CD8-positive, alpha-beta T cell (primary cell): ENCODE measurements at regions of chr5 and their contacts with region 1.

Region 1: GRCh38 chr5:126499853-126500342 is 76.7 kb downstream of the GRAMD2B start:
- DNase-seq: peak in 5 of 9 experiments; percentile 20 to 73 (median 34)
- ATAC-seq: peak; percentile 82
- H3K4me3 ChIP-seq: no peak overlapping the region
- H3K4me3 Mint-ChIP-seq: peak overlapping the region; percentile 6
- H3K27ac ChIP-seq: no peak overlapping the region
- H3K27ac Mint-ChIP-seq: peak overlapping the region; percentile 84
- H3K4me1 ChIP-seq: peaks cover 13% of the 10 kb centered on the region
- H3K4me1 Mint-ChIP-seq: peaks cover 35% of the 10 kb centered on the region
- H3K27me3 ChIP-seq: no peaks in the 10 kb centered on the region
- H3K27me3 Mint-ChIP-seq: no peaks in the 10 kb centered on the region
- CTCF ChIP-seq: peak; percentile 60

Region 2: DNA sequence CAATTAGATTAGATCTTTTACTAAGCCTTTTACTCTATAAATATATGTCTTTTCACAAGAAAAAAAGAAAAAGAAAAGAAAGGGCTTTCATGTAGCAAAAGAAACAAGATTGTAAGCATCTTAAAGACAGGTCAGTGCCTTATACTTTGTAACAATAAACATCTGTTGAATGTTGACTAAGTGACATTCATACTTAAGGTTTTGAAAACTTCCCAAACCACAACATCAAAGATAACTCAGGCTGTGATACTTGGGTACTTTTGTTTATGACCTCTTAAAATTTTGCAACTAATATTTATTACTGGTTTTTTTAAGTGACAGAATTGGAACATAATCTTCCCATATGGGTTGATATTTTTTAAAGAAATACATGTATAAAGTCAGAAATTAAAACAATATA is 69.3 kb before region 1 on chr5:
- CTCF ChIA-PET with region 1: interaction called, 5 read pairs
- POLR2A ChIA-PET with region 1: no interaction called
- intact Hi-C with region 1: loop called in 1 of 2 experiments (anchors 5 kb)
- DNase-seq: no peak
- ATAC-seq: no peak
- H3K4me3 ChIP-seq: no peak overlapping the region
- H3K4me3 Mint-ChIP-seq: no peak overlapping the region
- H3K27ac ChIP-seq: no peak overlapping the region
- H3K27ac Mint-ChIP-seq: no peak overlapping the region
- H3K4me1 ChIP-seq: no peaks in the 10 kb centered on the region
- H3K4me1 Mint-ChIP-seq: peaks cover 29% of the 10 kb centered on the region
- H3K27me3 ChIP-seq: no peaks in the 10 kb centered on the region
- H3K27me3 Mint-ChIP-seq: no peaks in the 10 kb centered on the region
- CTCF ChIP-seq: no peak

Region 3: GRCh38 chr5:126514131-126514557 is 14.2 kb after region 1 on chr5:
- CTCF ChIA-PET with region 1: interaction called, 17 read pairs
- POLR2A ChIA-PET with region 1: no interaction called
- intact Hi-C with region 1: no loop called
- DNase-seq: no peak
- ATAC-seq: no peak
- H3K4me3 ChIP-seq: no peak overlapping the region
- H3K4me3 Mint-ChIP-seq: no peak overlapping the region
- H3K27ac ChIP-seq: no peak overlapping the region
- H3K27ac Mint-ChIP-seq: no peak overlapping the region
- H3K4me1 ChIP-seq: peaks cover 17% of the 10 kb centered on the region
- H3K4me1 Mint-ChIP-seq: peaks cover 22% of the 10 kb centered on the region
- H3K27me3 ChIP-seq: no peaks in the 10 kb centered on the region
- H3K27me3 Mint-ChIP-seq: no peaks in the 10 kb centered on the region
- CTCF ChIP-seq: no peak

Region 4: GRCh38 chr5:126531543-126532120 is 31.7 kb after region 1 on chr5:
- CTCF ChIA-PET with region 1: interaction called, 17 read pairs
- POLR2A ChIA-PET with region 1: no interaction called
- intact Hi-C with region 1: no loop called
- DNase-seq: no peak
- ATAC-seq: no peak
- H3K4me3 ChIP-seq: no peak overlapping the region
- H3K4me3 Mint-ChIP-seq: no peak overlapping the region
- H3K27ac ChIP-seq: no peak overlapping the region
- H3K27ac Mint-ChIP-seq: no peak overlapping the region
- H3K4me1 ChIP-seq: no peaks in the 10 kb centered on the region
- H3K4me1 Mint-ChIP-seq: no peaks in the 10 kb centered on the region
- H3K27me3 ChIP-seq: no peaks in the 10 kb centered on the region
- H3K27me3 Mint-ChIP-seq: no peaks in the 10 kb centered on the region
- CTCF ChIP-seq: no peak

Region 5: DNA sequence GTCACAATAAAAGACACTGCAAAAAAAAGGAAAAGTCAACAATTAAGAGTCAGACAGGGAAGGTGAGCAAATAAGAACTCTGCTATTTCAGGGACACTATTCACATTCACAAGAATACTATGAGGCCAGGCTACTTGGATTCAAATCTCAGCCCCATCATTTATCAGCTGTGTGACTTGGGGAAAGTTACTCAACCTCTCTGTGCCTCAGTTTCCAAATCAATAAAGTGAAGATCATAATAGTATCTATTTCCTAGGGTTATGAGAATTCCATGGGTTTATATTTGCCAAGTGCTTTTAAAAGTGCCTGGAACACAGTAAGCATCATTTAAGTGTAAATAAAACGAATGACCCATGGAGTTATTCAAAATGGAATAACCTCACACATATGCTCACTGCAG is 38.7 kb after region 1 on chr5:
- CTCF ChIA-PET with region 1: interaction called, 36 read pairs
- POLR2A ChIA-PET with region 1: interaction called, 4 read pairs
- intact Hi-C with region 1: loop called (anchors 2 kb)
- DNase-seq: no peak
- ATAC-seq: no peak
- H3K4me3 ChIP-seq: no peak overlapping the region
- H3K4me3 Mint-ChIP-seq: no peak overlapping the region
- H3K27ac ChIP-seq: no peak overlapping the region
- H3K27ac Mint-ChIP-seq: no peak overlapping the region
- H3K4me1 ChIP-seq: no peaks in the 10 kb centered on the region
- H3K4me1 Mint-ChIP-seq: peaks cover 2% of the 10 kb centered on the region
- H3K27me3 ChIP-seq: no peaks in the 10 kb centered on the region
- H3K27me3 Mint-ChIP-seq: no peaks in the 10 kb centered on the region
- CTCF ChIP-seq: no peak